ENCODE measurements at regions of chr7 and their contacts with region 1.

Region 1: DNA sequence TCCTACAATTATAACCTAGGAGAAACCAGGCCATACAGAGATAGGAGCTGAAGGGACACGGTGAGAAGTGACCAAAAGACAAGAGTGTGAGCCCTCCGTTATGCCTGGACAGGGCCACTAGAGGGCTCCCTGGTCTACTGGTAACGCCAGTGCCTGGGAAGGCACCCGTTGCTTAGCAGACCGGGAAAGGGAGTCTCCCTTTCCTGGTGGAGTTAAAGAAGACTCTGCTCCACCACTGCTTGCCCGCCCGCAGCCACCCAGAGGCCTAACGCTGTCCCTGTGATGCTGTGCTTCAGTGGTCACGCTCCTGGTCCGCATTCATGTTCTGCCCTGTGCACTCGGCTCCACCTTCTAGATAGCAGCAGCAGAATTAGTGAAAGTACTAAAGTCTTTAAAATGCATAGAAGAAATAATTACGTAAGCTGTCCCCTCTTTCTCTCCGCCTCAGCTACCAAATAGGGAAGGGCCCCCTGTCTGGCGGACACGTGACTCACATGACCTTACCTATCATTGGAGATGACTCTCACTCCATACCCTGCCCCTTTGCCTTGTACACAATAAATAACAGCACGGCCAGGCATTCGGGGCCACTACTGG is 34.8 kb downstream of the GRID2IP start:
- DNase-seq: peak; percentile 89
- H3K4me3 ChIP-seq: no peak overlapping the region
- H3K27ac ChIP-seq: no peak overlapping the region
- H3K4me1 ChIP-seq: no peaks in the 10 kb centered on the region
- H3K27me3 ChIP-seq: no peaks in the 10 kb centered on the region
- CTCF ChIP-seq: peak; percentile 87

Region 2: DNA sequence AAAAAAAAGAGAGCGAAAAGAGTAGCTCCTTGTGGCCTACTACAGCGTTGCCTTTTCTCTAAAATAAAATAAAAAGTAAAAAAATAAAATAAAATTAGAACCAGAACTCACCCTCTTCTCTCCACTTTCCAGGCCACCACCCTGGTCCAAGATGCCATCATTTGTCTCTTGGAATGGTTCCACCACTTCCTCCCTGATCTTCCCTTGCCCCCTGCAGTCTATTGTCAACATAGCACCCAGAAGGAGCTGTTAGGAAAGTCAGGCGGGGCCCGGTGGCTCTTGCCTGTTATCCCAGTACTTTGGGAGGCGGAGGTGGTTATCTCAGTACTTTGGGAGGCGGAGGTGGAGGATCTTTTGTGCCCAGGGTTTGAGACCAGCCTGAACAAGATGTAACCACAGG is 42.4 kb after region 1 on chr7:
- CTCF ChIA-PET with region 1: interaction called, 16 read pairs
- POLR2A ChIA-PET with region 1: no interaction called
- intact Hi-C with region 1: loop called (anchors 2 kb)
- DNase-seq: peak; percentile 84
- H3K4me3 ChIP-seq: no peak overlapping the region
- H3K27ac ChIP-seq: no peak overlapping the region
- H3K4me1 ChIP-seq: no peaks in the 10 kb centered on the region
- H3K27me3 ChIP-seq: no peaks in the 10 kb centered on the region
- CTCF ChIP-seq: peak; percentile 58

Region 3: GRCh38 chr7:6571160-6571779 is 54.8 kb after region 1 on chr7:
- CTCF ChIA-PET with region 1: interaction called, 5 read pairs
- POLR2A ChIA-PET with region 1: no interaction called
- intact Hi-C with region 1: loop called (anchors 5 kb)
- DNase-seq: no peak
- H3K4me3 ChIP-seq: no peak overlapping the region
- H3K27ac ChIP-seq: no peak overlapping the region
- H3K4me1 ChIP-seq: no peaks in the 10 kb centered on the region
- H3K27me3 ChIP-seq: no peaks in the 10 kb centered on the region
- CTCF ChIP-seq: no peak

Region 4: GRCh38 chr7:7369134-7369533 is 852.6 kb after region 1 on chr7:
- CTCF ChIA-PET with region 1: no interaction called
- POLR2A ChIA-PET with region 1: no interaction called
- intact Hi-C with region 1: no loop called
- DNase-seq: no peak
- H3K4me3 ChIP-seq: no peak overlapping the region
- H3K27ac ChIP-seq: no peak overlapping the region
- H3K4me1 ChIP-seq: no peaks in the 10 kb centered on the region
- H3K27me3 ChIP-seq: peaks cover 5% of the 10 kb centered on the region
- CTCF ChIP-seq: no peak